ENCODE measurements at regions of chr11 and their contacts with region 1.

Region 1: DNA sequence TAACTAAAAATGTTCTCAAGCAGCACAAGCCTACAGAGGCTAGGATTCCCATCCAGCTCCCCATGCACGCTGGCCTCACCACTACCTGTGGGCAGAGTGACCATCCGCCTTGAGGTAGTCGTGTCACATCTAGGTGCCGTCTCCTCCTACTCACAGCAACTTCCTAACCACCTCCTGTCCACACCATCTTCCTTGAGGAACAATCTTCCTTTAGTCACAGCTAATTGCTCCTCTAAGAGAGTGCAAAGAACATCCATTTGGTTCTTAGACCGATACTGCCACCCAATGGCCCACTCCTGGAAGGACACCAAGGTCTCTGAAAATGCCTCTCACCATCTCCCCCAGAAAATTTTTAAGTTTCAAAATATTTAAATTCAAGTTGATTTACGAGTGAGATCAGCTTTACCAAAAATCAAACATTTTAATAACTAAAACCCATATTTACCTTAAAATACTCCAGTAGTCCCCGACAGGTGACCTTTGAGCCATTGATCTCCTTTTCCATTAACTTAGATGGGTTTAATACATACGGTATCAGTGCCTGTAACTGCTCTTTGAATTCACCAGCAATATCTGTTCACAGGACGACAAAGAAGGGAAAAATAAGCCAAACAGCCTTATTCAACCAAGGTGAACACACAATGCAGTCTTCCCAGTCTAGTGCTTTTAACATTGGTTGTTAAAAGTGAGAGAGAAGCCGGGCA is 21.7 kb upstream of the PLAAT3 start:
- DNase-seq: no peak

Region 2: GRCh38 chr11:63478896-63479295 is 157.0 kb before region 1 on chr11:
- intact Hi-C with region 1: loop called (anchors 5 to 10 kb)
- DNase-seq: no peak

Region 3: DNA sequence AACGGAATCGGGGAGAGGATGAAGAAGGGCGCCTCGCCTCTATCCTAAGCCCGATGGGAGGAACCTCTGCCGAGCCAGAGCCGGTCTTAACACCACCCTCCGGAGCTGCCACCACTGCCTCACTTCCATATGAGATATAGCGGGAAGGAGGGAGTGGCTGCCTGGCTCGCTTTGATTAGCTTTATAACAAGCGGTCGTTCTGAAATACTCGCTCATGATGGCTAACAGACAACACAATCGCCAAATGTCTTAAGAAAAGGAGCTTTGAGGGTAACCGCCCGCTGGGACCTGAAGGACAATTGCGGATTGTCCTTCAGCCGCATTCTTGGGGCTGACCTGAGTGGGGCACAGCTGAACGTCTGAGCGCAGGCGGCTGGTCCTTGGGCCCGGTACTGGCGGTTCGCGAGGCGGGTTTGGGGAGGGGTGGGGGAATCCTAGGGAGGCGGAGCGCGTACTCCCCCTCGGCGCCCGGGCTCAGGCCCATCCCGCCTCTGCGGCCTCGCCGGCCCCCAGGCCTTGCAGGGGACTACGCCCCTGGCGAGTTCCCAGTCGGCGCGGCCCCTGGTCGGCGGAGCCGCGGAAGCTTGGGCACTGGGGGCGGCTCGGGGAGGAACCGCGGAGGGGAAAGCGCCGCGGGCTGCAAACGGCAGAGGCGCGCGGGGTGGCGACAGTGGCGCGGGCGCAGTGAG is 145.2 kb before region 1 on chr11 and contains the start of gene PLAAT5:
- intact Hi-C with region 1: loop called in 1 of 2 experiments (anchors 5 kb)
- DNase-seq: peak; percentile 86
- total RNA-seq, gene PLAAT5: 0.86 to 3.2 TPM

Region 4: GRCh38 chr11:63710476-63711217 is 74.7 kb after region 1 on chr11:
- intact Hi-C with region 1: no loop called
- DNase-seq: no peak

Region 5: GRCh38 chr11:63761188-63761587 is 125.3 kb after region 1 on chr11:
- intact Hi-C with region 1: no loop called
- DNase-seq: peak; percentile 40